BJ (cell line): ENCODE measurements at regions of chr13 and their contacts with region 1.

Region 1: GRCh38 chr13:33610471-33611015 is 207.4 kb upstream of the RFC3 start:
- DNase-seq: no peak
- H3K4me3 ChIP-seq: no peak overlapping the region
- H3K27me3 ChIP-seq: peaks cover 1% of the 10 kb centered on the region
- CTCF ChIP-seq: no peak

Region 2: DNA sequence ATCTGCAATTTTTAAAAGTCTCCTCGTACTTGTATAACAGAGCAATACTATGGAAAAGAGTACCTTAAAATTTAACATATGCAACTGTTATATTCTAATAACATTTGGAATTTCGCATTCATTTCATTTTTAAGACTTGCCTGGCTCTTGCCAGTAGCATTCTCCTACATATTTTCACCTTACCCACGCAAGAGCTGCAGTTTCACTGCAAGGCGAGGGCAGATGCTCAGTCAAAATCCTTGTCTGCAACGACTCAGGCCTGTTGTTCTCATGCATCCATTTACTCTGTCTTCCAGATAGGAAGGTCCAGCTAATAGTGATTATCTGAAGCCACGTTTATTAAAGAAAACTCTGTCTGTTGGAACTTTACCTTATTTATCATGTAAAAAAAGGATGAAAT is 19.6 kb before region 1 on chr13:
- CTCF ChIA-PET with region 1: interaction called, 13 read pairs
- POLR2A ChIA-PET with region 1: no interaction called
- DNase-seq: no peak
- H3K4me3 ChIP-seq: no peak overlapping the region
- H3K27me3 ChIP-seq: no peaks in the 10 kb centered on the region; the same call in 1 of the 2 replicates
- CTCF ChIP-seq: no peak

Region 3: GRCh38 chr13:33710924-33711323 is 100.4 kb after region 1 on chr13:
- CTCF ChIA-PET with region 1: no interaction called
- POLR2A ChIA-PET with region 1: interaction called, 25 read pairs
- DNase-seq: no peak
- H3K4me3 ChIP-seq: no peak overlapping the region
- H3K27me3 ChIP-seq: peaks cover 2% of the 10 kb centered on the region; the same call in 1 of the 2 replicates
- CTCF ChIP-seq: no peak

Region 4: DNA sequence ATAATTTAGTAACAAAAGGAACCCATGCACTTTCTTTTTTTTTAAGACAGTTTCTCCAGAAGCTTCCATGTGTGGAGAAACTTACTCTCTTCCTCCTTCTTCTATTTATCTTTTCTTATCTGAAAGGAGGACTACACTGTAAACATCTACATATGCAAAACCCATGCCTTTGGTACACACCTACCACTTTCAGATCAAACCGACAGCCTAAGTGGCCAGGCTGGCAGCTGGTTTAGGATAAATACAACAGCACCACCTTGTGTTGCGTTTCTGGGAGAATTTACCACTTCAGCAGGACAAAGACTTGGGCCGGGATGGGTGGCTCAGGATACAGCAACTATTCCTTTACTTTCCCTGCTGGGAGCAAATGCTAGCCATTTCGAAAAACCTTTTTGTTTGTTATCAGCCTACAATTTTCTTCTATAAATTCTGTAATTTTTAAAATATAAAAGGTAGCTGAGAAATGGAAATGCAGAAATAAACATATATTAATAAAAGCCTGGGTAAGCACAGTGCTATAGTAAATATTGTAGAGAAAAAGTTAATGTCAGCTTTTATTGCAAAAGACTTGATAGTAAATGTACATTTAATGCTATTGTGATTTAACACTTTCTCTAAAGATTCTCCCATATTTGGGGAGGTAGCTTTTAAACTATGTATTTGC is 113.4 kb after region 1 on chr13:
- CTCF ChIA-PET with region 1: interaction called, 13 read pairs
- POLR2A ChIA-PET with region 1: no interaction called
- DNase-seq: no peak
- H3K4me3 ChIP-seq: no peak overlapping the region
- H3K27me3 ChIP-seq: no peaks in the 10 kb centered on the region
- CTCF ChIP-seq: peak; percentile 73

Region 5: GRCh38 chr13:33787051-33787591 is 176.6 kb after region 1 on chr13:
- CTCF ChIA-PET with region 1: no interaction called
- POLR2A ChIA-PET with region 1: interaction called, 10 read pairs
- DNase-seq: peak; percentile 10
- H3K4me3 ChIP-seq: peak overlapping the region; percentile 19; the same call in 1 of the 2 replicates
- H3K27me3 ChIP-seq: no peaks in the 10 kb centered on the region
- CTCF ChIP-seq: no peak